Calu3 (cell line): ENCODE measurements at regions of chr19 and their contacts with region 1.

Region 1: DNA sequence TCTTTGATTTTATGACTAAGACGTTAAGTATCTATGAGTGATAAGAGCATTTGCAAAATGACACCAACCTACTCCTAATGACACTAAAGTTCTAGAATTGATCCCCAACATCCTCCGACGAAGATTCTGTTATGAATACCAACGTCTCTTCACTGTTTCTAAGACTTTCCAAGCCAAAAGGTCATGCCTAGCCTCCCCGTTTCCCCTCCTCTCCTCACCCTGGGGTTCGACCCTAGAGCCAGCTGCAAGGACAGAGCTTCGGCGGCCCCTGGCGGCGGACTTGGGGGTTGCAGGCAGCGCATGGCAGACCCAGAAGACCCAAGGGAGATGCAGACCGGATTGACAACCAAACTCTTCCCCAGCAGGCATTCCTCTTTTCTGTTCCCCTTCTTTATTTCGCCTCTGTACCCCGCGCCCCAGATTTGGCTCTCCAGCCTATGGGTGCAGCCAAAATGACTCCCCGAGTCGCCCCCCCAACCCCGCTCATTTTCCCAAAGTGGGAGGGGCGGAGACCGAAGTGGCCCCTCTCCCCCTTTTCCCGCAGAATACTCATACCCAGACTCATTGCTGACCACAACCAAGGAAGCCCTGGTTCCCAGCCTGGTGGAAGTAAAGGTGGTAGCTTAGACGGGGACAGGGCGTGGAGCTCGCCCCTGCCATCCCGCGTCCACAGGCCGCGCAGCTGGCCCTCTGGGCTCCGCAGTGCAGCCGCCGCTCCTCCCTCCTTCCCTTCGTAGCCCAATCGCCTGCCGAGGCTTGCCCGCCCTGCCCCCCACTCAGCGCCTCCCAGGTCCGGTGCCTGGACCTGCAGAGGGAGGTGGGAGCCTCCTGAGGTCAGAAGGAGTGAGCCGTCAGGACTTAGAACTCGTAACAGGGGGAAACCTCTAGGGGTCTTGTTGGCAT is 4.1 kb upstream of the EML2 start:
- DNase-seq: peak; percentile 94
- H3K4me3 Mint-ChIP-seq: peak overlapping the region; percentile 63
- H3K27ac Mint-ChIP-seq: peak overlapping the region; percentile 89
- H3K4me1 Mint-ChIP-seq: peaks cover 50% of the 10 kb centered on the region
- H3K27me3 Mint-ChIP-seq: peaks cover 15% of the 10 kb centered on the region
- CTCF ChIP-seq: peak; percentile 99

Region 2: GRCh38 chr19:44182145-44182544 is 1461.1 kb before region 1 on chr19:
- CTCF ChIA-PET with region 1: no interaction called
- intact Hi-C with region 1: no loop called
- DNase-seq: no peak
- H3K4me3 Mint-ChIP-seq: no peak overlapping the region
- H3K27ac Mint-ChIP-seq: no peak overlapping the region
- H3K4me1 Mint-ChIP-seq: no peaks in the 10 kb centered on the region
- H3K27me3 Mint-ChIP-seq: no peaks in the 10 kb centered on the region
- CTCF ChIP-seq: no peak

Region 3: GRCh38 chr19:45496349-45496953 is 146.8 kb before region 1 on chr19:
- CTCF ChIA-PET with region 1: interaction called, 16 read pairs
- intact Hi-C with region 1: loop called (anchors 2 kb)
- DNase-seq: peak; percentile 57
- H3K4me3 Mint-ChIP-seq: peak overlapping the region; percentile 74
- H3K27ac Mint-ChIP-seq: no peak overlapping the region
- H3K4me1 Mint-ChIP-seq: peaks cover 18% of the 10 kb centered on the region
- H3K27me3 Mint-ChIP-seq: peaks cover 31% of the 10 kb centered on the region
- CTCF ChIP-seq: no peak

Region 4: DNA sequence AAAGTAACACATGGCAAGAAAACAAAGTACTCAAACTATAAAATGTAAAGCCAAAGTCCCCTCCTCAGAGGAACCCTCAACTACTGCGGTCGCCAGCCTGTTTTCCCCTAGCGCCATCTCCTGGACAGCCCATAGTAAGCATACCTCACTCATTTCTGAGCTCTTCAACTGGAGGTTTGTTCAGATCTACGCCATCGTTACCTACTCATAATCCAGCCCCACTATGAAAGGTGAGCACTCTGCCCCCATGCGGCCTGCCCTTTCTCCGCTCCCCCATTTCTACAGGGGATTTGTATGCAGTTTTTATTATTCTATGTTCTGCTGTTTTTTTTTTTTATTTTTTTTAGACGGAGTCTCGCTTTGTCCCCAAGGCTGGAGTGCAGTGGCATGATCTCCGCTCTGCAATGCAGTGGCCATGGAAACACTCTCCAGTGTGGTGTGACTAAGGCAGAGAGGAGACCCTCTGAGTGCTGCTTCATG is 84.8 kb before region 1 on chr19:
- CTCF ChIA-PET with region 1: interaction called, 12 read pairs
- intact Hi-C with region 1: no loop called
- DNase-seq: peak; percentile 63
- H3K4me3 Mint-ChIP-seq: no peak overlapping the region
- H3K27ac Mint-ChIP-seq: no peak overlapping the region
- H3K4me1 Mint-ChIP-seq: peaks cover 9% of the 10 kb centered on the region
- H3K27me3 Mint-ChIP-seq: no peaks in the 10 kb centered on the region
- CTCF ChIP-seq: peak; percentile 53

Region 5: DNA sequence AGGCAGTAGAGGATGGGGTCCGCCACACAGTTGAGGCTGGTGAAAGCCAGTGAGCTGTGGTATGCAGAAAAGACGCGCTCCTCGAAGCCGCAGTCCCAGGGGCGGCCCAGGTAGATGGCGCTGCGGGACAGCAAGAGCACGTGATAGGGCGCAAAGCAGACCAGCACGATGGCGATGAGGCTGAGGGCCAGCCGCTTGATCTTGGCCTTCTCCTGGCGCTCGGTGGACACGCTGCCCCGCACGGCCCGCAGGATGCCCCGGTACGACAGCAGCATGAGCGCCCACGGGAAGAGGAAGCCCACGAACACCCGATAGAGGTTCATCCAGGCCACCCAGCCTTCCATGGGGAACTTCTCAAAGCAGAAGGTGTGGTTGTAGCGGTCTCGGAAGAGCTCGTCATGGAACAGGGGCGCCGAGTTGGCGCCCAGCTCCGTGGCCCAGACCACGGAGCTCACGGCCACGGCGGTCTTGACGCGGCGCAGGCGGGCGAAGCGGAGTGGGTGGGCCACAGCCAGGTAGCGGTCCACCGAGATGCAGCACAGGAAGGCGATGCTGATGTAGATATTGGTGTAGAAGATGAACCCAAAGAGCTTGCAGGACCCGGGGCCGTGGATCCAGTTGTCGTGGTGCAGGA is 52.2 kb before region 1 on chr19:
- CTCF ChIA-PET with region 1: interaction called, 8 read pairs
- intact Hi-C with region 1: loop called (anchors 5 kb)
- DNase-seq: peak; percentile 62
- H3K4me3 Mint-ChIP-seq: no peak overlapping the region
- H3K27ac Mint-ChIP-seq: no peak overlapping the region
- H3K4me1 Mint-ChIP-seq: peaks cover 6% of the 10 kb centered on the region
- H3K27me3 Mint-ChIP-seq: peaks cover 22% of the 10 kb centered on the region
- CTCF ChIP-seq: peak; percentile 34

Region 6: GRCh38 chr19:45632468-45633196 is 10.6 kb before region 1 on chr19:
- CTCF ChIA-PET with region 1: interaction called, 23 read pairs
- intact Hi-C with region 1: no loop called
- DNase-seq: peak; percentile 90
- H3K4me3 Mint-ChIP-seq: no peak overlapping the region
- H3K27ac Mint-ChIP-seq: peak overlapping the region; percentile 70
- H3K4me1 Mint-ChIP-seq: no peaks in the 10 kb centered on the region
- H3K27me3 Mint-ChIP-seq: no peaks in the 10 kb centered on the region
- CTCF ChIP-seq: no peak

Region 7: DNA sequence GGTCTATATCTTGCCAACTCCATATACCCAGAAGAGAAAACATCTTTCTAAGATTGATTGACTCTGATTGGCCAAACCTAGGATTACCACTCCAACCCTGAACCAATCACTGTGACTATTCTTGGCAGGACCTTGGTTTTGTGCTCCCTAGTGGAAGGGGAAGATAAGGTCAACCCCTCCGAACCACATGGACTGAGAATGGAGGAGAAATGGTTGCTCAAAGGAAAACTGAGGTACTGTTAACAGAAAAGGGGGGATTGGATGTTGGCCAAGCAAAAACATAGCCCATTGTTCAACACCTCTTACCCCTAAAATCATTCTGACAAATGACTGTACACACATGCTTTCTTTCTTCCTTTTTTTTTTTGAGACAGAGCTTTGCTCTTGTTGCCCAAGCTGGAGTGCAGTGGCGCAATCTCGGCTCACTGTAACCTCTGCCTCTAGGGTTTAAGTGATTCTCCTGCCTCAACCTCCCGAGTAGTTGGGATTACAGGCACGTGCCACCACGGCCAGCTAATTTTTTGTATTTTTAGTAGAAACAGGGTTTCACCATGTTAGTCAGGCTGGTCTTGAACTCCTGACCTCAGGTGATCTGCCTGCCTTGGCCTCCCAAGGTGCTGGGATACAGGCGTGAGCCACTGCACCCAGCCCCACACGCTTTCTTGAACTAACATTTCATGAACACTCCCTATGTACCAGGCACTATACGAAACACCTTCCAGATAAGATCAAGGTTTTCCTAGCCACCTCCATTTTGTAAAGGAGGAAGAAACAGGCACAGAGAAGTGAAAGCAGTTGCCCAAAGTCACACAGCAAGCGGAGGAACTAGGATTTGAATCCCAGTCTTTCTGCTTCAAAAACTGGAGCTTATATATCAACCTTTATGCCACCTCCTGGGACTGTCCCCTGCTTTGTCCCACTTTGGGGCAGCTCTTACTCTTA is 96.5 kb after region 1 on chr19:
- CTCF ChIA-PET with region 1: no interaction called
- intact Hi-C with region 1: no loop called
- DNase-seq: no peak
- H3K4me3 Mint-ChIP-seq: no peak overlapping the region
- H3K27ac Mint-ChIP-seq: no peak overlapping the region
- H3K4me1 Mint-ChIP-seq: no peaks in the 10 kb centered on the region
- H3K27me3 Mint-ChIP-seq: peaks cover 21% of the 10 kb centered on the region
- CTCF ChIP-seq: no peak